Naive thymus-derived CD4-positive, alpha-beta T cell (primary cell): ENCODE measurements at regions of chr9 and their contacts with region 1.

Region 1: DNA sequence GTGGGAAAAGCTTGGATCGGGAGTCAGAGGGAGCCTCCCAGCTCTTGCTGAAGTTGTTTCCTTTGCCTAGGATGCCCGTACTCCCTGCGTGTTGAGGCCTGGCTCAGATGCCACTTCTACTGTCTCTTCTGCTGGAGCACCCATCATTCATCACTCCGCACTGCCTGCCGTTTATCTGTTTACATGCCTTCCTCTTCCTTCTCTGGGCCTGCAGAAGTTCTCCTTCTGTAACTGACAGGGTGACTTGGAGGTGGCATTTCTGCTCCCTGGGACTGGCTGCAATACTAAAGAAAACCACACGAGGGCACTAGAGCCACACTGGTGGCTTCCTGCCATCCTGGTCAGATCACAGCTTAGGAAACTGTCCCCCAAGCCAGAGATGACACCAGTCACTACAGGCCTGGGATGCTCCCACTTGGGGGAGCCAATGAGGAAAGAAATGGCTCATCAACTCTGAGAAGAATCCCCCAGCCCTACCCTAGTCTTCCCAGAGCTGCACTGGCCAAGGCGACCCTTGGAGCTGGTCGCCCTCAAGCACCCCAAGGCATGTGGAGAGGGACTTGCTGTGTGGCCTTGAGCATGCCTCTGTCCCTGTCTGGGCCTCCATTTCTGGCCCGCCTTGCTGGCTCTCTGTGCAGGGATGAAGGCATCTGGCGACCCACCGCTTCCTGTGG is 9.7 kb upstream of the SLC25A51 start:
- DNase-seq: peak; percentile 54 to 85 (median 65)
- ATAC-seq: peak; percentile 89
- H3K4me3 ChIP-seq: no peak overlapping the region
- H3K4me3 Mint-ChIP-seq: no peak overlapping the region
- H3K27ac ChIP-seq: no peak overlapping the region
- H3K27ac Mint-ChIP-seq: peak overlapping the region in 1 of 9 donors; percentile 59
- H3K4me1 ChIP-seq: no peaks in the 10 kb centered on the region
- H3K4me1 Mint-ChIP-seq: peaks cover 0 to 7% (median 4%) of the 10 kb centered on the region in 7 donors
- H3K27me3 ChIP-seq: no peaks in the 10 kb centered on the region
- H3K27me3 Mint-ChIP-seq: peaks cover 0 to 4% (median 0%) of the 10 kb centered on the region in 5 donors

Region 2: GRCh38 chr9:37746848-37747753 is 166.5 kb before region 1 on chr9:
- CTCF ChIA-PET with region 1: no interaction called
- POLR2A ChIA-PET with region 1: no interaction called
- intact Hi-C with region 1: loop called in 1 of 2 experiments (anchors 2 kb)
- DNase-seq: peak in 8 of 9 donors; percentile 12 to 54 (median 39)
- ATAC-seq: peak; percentile 88
- H3K4me3 ChIP-seq: no peak overlapping the region
- H3K4me3 Mint-ChIP-seq: no peak overlapping the region
- H3K27ac ChIP-seq: no peak overlapping the region
- H3K27ac Mint-ChIP-seq: peak overlapping the region in 2 of 9 donors; percentile 59 to 62
- H3K4me1 ChIP-seq: no peaks in the 10 kb centered on the region
- H3K4me1 Mint-ChIP-seq: peaks cover 0 to 5% (median 4%) of the 10 kb centered on the region in 7 donors
- H3K27me3 ChIP-seq: no peaks in the 10 kb centered on the region
- H3K27me3 Mint-ChIP-seq: no peaks in the 10 kb centered on the region

Region 3: DNA sequence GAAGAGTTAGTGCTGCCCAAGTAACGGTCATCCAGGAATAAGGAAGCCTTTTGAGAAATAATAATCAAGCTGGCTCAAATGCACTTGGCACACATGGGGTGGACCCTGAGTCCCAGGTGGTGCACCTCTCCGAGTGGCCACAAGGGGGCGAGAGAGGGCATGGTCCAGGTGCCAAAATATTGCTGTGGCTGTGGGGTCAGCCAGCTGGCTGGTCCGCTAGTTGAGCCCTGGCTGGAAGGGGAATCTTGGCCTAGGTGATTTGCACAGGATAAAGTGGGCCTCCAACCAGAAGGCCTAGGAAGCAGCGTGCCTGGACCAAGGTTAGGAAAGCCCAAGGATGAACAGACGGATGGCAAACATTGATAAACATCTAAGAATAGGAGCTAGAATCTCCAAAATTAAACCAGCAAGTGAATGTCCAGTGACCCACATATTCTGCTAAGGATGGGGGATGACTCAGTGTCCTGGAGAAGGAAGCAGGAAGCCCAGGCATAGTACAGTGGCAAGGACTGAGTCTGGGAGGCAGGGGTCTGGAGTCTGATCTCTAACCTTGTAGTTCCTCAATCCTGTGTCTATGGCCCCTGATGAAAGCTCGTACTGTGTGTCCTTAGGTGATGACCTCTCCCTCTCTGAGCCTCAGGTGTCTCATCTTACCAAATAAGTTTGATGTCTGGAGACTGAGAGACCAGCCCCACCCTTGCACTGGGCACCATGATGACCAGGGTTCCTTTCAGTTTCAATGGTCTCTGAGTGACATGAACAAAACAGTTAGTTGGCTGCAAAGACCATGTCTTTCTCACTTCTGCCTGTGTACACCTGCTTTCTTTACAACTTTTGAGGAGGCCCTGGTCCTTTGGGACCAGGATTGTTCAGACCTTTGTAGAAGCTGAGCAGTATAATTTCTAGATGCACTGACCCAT is 174.6 kb after region 1 on chr9:
- CTCF ChIA-PET with region 1: interaction called, 20 read pairs
- POLR2A ChIA-PET with region 1: no interaction called
- intact Hi-C with region 1: loop called (anchors 1 kb)
- DNase-seq: peak in 8 of 9 donors; percentile 26 to 79 (median 61)
- ATAC-seq: peak; percentile 91
- H3K4me3 ChIP-seq: no peak overlapping the region
- H3K4me3 Mint-ChIP-seq: no peak overlapping the region
- H3K27ac ChIP-seq: no peak overlapping the region
- H3K27ac Mint-ChIP-seq: peak overlapping the region in 1 of 9 donors; percentile 3
- H3K4me1 ChIP-seq: no peaks in the 10 kb centered on the region
- H3K4me1 Mint-ChIP-seq: peaks cover 0 to 4% (median 0%) of the 10 kb centered on the region in 7 donors
- H3K27me3 ChIP-seq: no peaks in the 10 kb centered on the region
- H3K27me3 Mint-ChIP-seq: peaks cover 0 to 21% (median 7%) of the 10 kb centered on the region in 5 donors

Region 4: DNA sequence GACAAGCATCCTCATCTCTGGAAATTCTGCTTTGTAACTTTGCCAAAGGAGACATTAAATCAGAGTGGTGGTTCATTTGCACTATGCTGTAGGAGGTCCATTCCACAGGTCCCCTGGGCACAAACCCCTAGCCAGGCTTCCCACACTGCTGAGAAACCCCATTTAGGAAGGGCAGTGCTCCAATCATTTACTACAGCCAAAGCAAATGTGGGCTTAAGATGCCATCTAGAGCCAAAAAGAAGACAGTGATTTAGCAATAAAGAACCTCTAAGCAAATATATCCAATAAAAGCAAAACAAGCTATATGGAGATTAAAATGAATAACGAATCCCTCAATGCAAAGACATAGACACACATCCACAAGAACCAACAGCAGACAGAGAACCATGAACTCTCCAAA is 349.9 kb after region 1 on chr9:
- CTCF ChIA-PET with region 1: no interaction called
- POLR2A ChIA-PET with region 1: no interaction called
- intact Hi-C with region 1: loop called in 1 of 2 experiments (anchors 1 kb)
- DNase-seq: no peak
- ATAC-seq: no peak
- H3K4me3 ChIP-seq: no peak overlapping the region
- H3K4me3 Mint-ChIP-seq: no peak overlapping the region
- H3K27ac ChIP-seq: no peak overlapping the region
- H3K27ac Mint-ChIP-seq: no peak overlapping the region
- H3K4me1 ChIP-seq: no peaks in the 10 kb centered on the region
- H3K4me1 Mint-ChIP-seq: no peaks in the 10 kb centered on the region
- H3K27me3 ChIP-seq: peaks cover 0 to 4% of the 10 kb centered on the region in 2 donors
- H3K27me3 Mint-ChIP-seq: peaks cover 8 to 32% (median 23%) of the 10 kb centered on the region in 5 donors

Region 5: DNA sequence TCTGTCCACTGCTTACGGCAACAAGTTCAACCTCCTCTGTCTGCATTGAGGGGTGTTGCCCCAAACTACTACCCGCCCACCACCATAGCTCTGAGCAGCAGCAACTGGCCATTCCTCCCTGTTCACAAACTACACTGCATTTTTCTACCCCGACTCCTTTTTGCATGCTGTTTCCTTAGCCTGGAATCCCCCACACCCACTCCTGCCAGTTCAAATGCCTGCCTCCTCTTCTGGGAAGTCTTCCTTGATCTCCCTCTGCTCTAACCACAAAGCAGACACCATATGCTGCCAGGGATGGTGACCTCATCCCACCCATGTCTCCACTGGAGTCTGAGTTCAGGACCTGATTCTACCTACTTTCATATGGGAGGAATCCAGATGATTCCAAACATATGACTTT is 492.2 kb after region 1 on chr9:
- CTCF ChIA-PET with region 1: no interaction called
- POLR2A ChIA-PET with region 1: no interaction called
- intact Hi-C with region 1: loop called in 1 of 2 experiments (anchors 1 kb)
- DNase-seq: no peak
- ATAC-seq: no peak
- H3K4me3 ChIP-seq: no peak overlapping the region
- H3K4me3 Mint-ChIP-seq: no peak overlapping the region
- H3K27ac ChIP-seq: no peak overlapping the region
- H3K27ac Mint-ChIP-seq: no peak overlapping the region
- H3K4me1 ChIP-seq: no peaks in the 10 kb centered on the region
- H3K4me1 Mint-ChIP-seq: peaks cover 0 to 2% (median 0%) of the 10 kb centered on the region in 7 donors
- H3K27me3 ChIP-seq: no peaks in the 10 kb centered on the region
- H3K27me3 Mint-ChIP-seq: peaks cover 3 to 32% (median 6%) of the 10 kb centered on the region in 5 donors